CD8-positive, alpha-beta T cell (primary cell): ENCODE measurements at regions of chr7 and their contacts with region 1.

Region 1: GRCh38 chr7:129091484-129092002 is 36.6 kb upstream of the TNPO3 start:
- DNase-seq: peak; percentile 73 to 92 (median 83)
- ATAC-seq: peak; percentile 89
- H3K4me3 ChIP-seq: no peak overlapping the region
- H3K4me3 Mint-ChIP-seq: no peak overlapping the region
- H3K27ac ChIP-seq: no peak overlapping the region
- H3K27ac Mint-ChIP-seq: peak overlapping the region; percentile 32
- H3K4me1 ChIP-seq: peaks cover 11% of the 10 kb centered on the region
- H3K4me1 Mint-ChIP-seq: peaks cover 16% of the 10 kb centered on the region
- H3K27me3 ChIP-seq: no peaks in the 10 kb centered on the region
- H3K27me3 Mint-ChIP-seq: no peaks in the 10 kb centered on the region
- CTCF ChIP-seq: peak; percentile 99

Region 2: DNA sequence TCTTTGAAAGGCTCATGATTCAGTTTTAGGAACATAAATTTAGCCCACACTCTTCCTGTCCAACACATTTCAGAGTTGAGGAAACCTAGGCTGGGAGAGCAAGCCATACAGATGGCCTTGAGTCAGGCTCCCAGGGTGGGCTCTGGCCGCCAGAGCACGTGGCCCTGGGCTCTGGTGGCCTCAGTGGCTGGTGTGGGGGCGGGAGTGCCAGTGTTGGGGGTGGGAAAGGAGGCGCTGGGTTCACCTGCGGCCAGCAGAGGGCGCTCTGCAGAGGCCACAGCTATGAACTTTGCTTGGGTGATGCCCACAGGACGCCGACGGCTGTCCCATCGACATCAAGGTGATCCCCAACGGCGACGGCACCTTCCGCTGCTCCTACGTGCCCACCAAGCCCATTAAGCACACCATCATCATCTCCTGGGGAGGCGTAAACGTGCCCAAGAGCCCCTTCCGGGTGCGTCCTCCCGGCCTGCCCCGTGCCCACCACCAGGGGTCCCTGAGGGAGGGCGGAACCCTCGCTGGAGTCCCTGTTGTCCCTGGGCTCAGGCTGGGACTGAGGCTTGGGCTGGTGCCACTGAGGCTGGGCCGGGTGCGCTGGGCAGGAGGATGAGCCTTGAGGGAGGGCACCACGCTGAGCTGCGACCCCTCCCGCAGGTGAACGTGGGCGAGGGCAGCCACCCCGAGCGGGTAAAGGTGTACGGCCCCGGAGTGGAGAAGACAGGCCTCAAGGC is 249.5 kb before region 1 on chr7:
- CTCF ChIA-PET with region 1: no interaction called
- POLR2A ChIA-PET with region 1: no interaction called
- intact Hi-C with region 1: loop called (anchors 2 to 5 kb)
- DNase-seq: peak in 8 of 9 experiments; percentile 25 to 71 (median 58)
- ATAC-seq: peak; percentile 68
- H3K4me3 ChIP-seq: no peak overlapping the region
- H3K4me3 Mint-ChIP-seq: no peak overlapping the region
- H3K27ac ChIP-seq: no peak overlapping the region
- H3K27ac Mint-ChIP-seq: no peak overlapping the region
- H3K4me1 ChIP-seq: no peaks in the 10 kb centered on the region
- H3K4me1 Mint-ChIP-seq: no peaks in the 10 kb centered on the region
- H3K27me3 ChIP-seq: no peaks in the 10 kb centered on the region
- H3K27me3 Mint-ChIP-seq: no peaks in the 10 kb centered on the region
- CTCF ChIP-seq: peak; percentile 72

Region 3: GRCh38 chr7:128909625-128910257 is 181.8 kb before region 1 on chr7:
- CTCF ChIA-PET with region 1: interaction called, 15 read pairs
- POLR2A ChIA-PET with region 1: no interaction called
- intact Hi-C with region 1: loop called in 1 of 2 experiments (anchors 1 kb)
- DNase-seq: no peak
- ATAC-seq: no peak
- H3K4me3 ChIP-seq: no peak overlapping the region
- H3K4me3 Mint-ChIP-seq: no peak overlapping the region
- H3K27ac ChIP-seq: no peak overlapping the region
- H3K27ac Mint-ChIP-seq: no peak overlapping the region
- H3K4me1 ChIP-seq: peaks cover 1% of the 10 kb centered on the region
- H3K4me1 Mint-ChIP-seq: peaks cover 3% of the 10 kb centered on the region
- H3K27me3 ChIP-seq: peaks cover 3% of the 10 kb centered on the region in 2 experiments
- H3K27me3 Mint-ChIP-seq: peaks cover 55% of the 10 kb centered on the region
- CTCF ChIP-seq: no peak

Region 4: DNA sequence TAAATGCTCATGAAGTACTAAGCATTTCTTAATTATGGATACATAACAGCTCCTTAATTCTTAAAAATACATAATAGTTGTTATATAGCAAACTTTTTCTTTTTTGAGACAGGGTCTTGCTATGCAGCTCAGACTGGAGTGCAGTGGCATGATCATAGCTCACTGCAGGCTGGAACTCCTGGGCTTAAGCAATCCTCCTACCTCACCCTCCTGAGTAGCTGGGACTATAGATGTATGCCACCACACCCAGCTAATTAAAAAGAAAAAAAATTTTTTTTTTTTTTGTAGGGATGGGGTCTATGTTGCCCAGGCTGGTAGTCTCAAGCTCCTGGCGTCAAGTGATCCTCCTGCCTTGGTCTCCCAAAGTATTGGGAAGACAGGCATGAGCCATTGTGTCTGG is 122.9 kb before region 1 on chr7:
- CTCF ChIA-PET with region 1: interaction called, 11 read pairs
- POLR2A ChIA-PET with region 1: no interaction called
- intact Hi-C with region 1: loop called in 1 of 2 experiments (anchors 10 kb)
- DNase-seq: no peak
- ATAC-seq: no peak
- H3K4me3 ChIP-seq: no peak overlapping the region
- H3K4me3 Mint-ChIP-seq: no peak overlapping the region
- H3K27ac ChIP-seq: no peak overlapping the region
- H3K27ac Mint-ChIP-seq: no peak overlapping the region
- H3K4me1 ChIP-seq: no peaks in the 10 kb centered on the region
- H3K4me1 Mint-ChIP-seq: no peaks in the 10 kb centered on the region
- H3K27me3 ChIP-seq: no peaks in the 10 kb centered on the region
- H3K27me3 Mint-ChIP-seq: no peaks in the 10 kb centered on the region
- CTCF ChIP-seq: no peak

Region 5: GRCh38 chr7:129009437-129009836 is 82.1 kb before region 1 on chr7:
- CTCF ChIA-PET with region 1: interaction called, 3 read pairs
- POLR2A ChIA-PET with region 1: no interaction called
- intact Hi-C with region 1: loop called in 1 of 2 experiments (anchors 5 kb)
- DNase-seq: peak in 1 of 9 experiments; percentile 5
- ATAC-seq: no peak
- H3K4me3 ChIP-seq: no peak overlapping the region
- H3K4me3 Mint-ChIP-seq: no peak overlapping the region
- H3K27ac ChIP-seq: no peak overlapping the region
- H3K27ac Mint-ChIP-seq: peak overlapping the region; percentile 27
- H3K4me1 ChIP-seq: no peaks in the 10 kb centered on the region
- H3K4me1 Mint-ChIP-seq: peaks cover 20% of the 10 kb centered on the region
- H3K27me3 ChIP-seq: no peaks in the 10 kb centered on the region
- H3K27me3 Mint-ChIP-seq: no peaks in the 10 kb centered on the region
- CTCF ChIP-seq: no peak

Region 6: DNA sequence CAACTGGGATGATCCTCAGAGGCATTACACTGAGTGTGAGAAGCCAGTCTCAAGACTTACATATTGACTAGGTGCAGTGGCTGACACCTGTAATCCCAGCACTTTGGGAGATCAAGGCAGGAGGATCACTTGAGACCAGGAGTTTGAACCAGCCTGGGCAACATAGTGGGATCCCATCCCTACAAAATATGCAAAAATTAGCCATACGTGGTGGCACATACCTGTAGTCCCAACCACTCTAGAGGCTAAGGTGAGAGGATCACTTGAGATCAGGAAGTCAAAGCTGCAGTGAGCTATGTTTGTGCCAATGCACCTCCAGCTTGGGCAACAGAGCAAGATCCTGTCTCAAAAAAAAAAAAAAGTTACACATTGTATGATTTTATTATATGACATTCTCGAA is 13.1 kb before region 1 on chr7:
- CTCF ChIA-PET with region 1: interaction called, 34 read pairs
- POLR2A ChIA-PET with region 1: interaction called, 3 read pairs
- intact Hi-C with region 1: no loop called
- DNase-seq: no peak
- ATAC-seq: no peak
- H3K4me3 ChIP-seq: no peak overlapping the region
- H3K4me3 Mint-ChIP-seq: no peak overlapping the region
- H3K27ac ChIP-seq: no peak overlapping the region
- H3K27ac Mint-ChIP-seq: no peak overlapping the region
- H3K4me1 ChIP-seq: no peaks in the 10 kb centered on the region
- H3K4me1 Mint-ChIP-seq: no peaks in the 10 kb centered on the region
- H3K27me3 ChIP-seq: no peaks in the 10 kb centered on the region
- H3K27me3 Mint-ChIP-seq: peaks cover 12% of the 10 kb centered on the region
- CTCF ChIP-seq: no peak

Region 7: GRCh38 chr7:129136887-129137642 is 45.5 kb after region 1 on chr7:
- CTCF ChIA-PET with region 1: interaction called, 4 read pairs
- POLR2A ChIA-PET with region 1: no interaction called
- intact Hi-C with region 1: loop called in 1 of 2 experiments (anchors 5 kb)
- DNase-seq: peak in 1 of 9 experiments; percentile 42
- ATAC-seq: peak; percentile 87
- H3K4me3 ChIP-seq: no peak overlapping the region
- H3K4me3 Mint-ChIP-seq: peak overlapping the region; percentile 60
- H3K27ac ChIP-seq: peak overlapping the region; percentile 19 to 63
- H3K27ac Mint-ChIP-seq: peak overlapping the region; percentile 91
- H3K4me1 ChIP-seq: peaks cover 32% of the 10 kb centered on the region
- H3K4me1 Mint-ChIP-seq: peaks cover 37% of the 10 kb centered on the region
- H3K27me3 ChIP-seq: no peaks in the 10 kb centered on the region
- H3K27me3 Mint-ChIP-seq: no peaks in the 10 kb centered on the region
- CTCF ChIP-seq: no peak